CD14-positive monocyte (primary cell): ENCODE measurements at regions of chr5 and their contacts with region 1.

Region 1: GRCh38 chr5:149141224-149141956 is at the start of gene ABLIM3:
- DNase-seq: peak; percentile 34 to 59 (median 56)
- H3K4me3 ChIP-seq: peak within 1 kb of the TSS; percentile 42 to 84 (median 43)
- H3K4me3 Mint-ChIP-seq: peak within 1 kb of the TSS; percentile 67 to 87
- H3K27ac ChIP-seq: no peak within 1 kb of the TSS
- H3K27ac Mint-ChIP-seq: no peak within 1 kb of the TSS
- H3K4me1 ChIP-seq: peaks cover 10 to 14% of the 10 kb centered on the region in 2 donors
- H3K4me1 Mint-ChIP-seq: peaks cover 9% of the 10 kb centered on the region
- H3K27me3 ChIP-seq: peaks cover 0 to 10% of the 10 kb centered on the region in 2 donors
- H3K27me3 Mint-ChIP-seq: peaks cover 8 to 29% (median 13%) of the 10 kb centered on the region in 3 donors
- CTCF ChIP-seq: peak; percentile 94
- polyA plus RNA-seq, gene ABLIM3: 0.22 to 0.74 TPM in 2 of 3 donors, not detected in the other

Region 2: DNA sequence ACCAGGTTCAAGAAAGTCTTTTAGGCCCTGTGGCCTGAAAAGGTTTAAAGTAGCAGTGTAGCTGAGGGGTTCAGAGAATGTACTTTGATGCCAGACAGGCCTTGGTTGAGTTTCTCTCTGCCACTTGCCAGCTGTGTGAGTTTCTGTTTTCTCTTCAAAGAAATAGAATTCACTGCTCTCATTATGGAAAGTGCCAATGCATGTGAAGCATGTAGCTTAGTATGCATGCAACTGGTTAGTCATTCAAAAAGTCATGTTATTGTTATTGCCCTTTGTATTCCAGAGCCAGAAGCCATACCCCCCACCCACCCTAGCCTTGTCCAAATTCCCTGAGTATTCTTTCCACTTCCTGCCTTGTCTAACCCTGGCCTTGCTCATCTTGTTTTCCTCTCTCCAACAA is 213.2 kb before region 1 on chr5:
- intact Hi-C with region 1: no loop called
- DNase-seq: no peak
- H3K4me3 ChIP-seq: no peak overlapping the region
- H3K4me3 Mint-ChIP-seq: no peak overlapping the region
- H3K27ac ChIP-seq: no peak overlapping the region
- H3K27ac Mint-ChIP-seq: no peak overlapping the region
- H3K4me1 ChIP-seq: no peaks in the 10 kb centered on the region
- H3K4me1 Mint-ChIP-seq: peaks cover 5% of the 10 kb centered on the region
- H3K27me3 ChIP-seq: no peaks in the 10 kb centered on the region
- H3K27me3 Mint-ChIP-seq: peaks cover 2 to 5% (median 4%) of the 10 kb centered on the region in 3 donors
- CTCF ChIP-seq: no peak

Region 3: DNA sequence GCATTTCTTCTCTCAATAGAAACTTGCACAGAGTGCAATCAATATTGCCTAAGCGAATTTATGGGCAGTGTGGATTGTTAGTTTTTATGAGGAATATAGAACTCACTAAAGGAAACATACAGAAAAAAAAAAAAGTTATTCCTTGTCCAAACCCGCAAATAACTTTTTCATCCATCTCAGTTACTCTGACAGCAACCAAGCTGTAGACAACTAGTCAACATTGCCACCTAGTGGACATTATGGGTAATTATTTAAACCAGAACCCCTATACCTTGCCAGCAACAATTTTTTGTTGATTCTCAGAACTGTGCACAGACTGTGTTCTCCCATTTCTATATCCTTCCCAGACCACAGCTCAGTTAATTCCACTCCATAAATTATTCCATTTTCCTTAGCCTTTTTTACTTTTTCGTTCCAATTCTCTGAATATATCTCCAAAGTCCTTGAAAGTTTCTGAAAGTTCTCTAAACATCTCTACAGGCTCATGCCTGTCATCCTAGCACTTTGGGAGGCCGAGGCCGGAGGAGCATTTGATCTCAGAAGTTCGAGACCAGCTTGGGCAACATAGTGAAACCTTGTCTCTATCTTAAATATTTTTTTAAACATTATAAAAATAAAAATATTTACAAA is 127.7 kb after region 1 on chr5:
- intact Hi-C with region 1: loop called (anchors 2 to 5 kb)
- DNase-seq: peak; percentile 23 to 62 (median 47)
- H3K4me3 ChIP-seq: no peak overlapping the region
- H3K4me3 Mint-ChIP-seq: no peak overlapping the region
- H3K27ac ChIP-seq: no peak overlapping the region
- H3K27ac Mint-ChIP-seq: no peak overlapping the region
- H3K4me1 ChIP-seq: peaks cover 12 to 17% of the 10 kb centered on the region in 2 donors
- H3K4me1 Mint-ChIP-seq: peaks cover 19% of the 10 kb centered on the region
- H3K27me3 ChIP-seq: peaks cover 27 to 38% of the 10 kb centered on the region in 2 donors
- H3K27me3 Mint-ChIP-seq: peaks cover 32 to 47% (median 41%) of the 10 kb centered on the region in 3 donors
- CTCF ChIP-seq: peak; percentile 94